B cell (primary cell): ENCODE measurements at regions of chr3 and their contacts with region 1.

Region 1: DNA sequence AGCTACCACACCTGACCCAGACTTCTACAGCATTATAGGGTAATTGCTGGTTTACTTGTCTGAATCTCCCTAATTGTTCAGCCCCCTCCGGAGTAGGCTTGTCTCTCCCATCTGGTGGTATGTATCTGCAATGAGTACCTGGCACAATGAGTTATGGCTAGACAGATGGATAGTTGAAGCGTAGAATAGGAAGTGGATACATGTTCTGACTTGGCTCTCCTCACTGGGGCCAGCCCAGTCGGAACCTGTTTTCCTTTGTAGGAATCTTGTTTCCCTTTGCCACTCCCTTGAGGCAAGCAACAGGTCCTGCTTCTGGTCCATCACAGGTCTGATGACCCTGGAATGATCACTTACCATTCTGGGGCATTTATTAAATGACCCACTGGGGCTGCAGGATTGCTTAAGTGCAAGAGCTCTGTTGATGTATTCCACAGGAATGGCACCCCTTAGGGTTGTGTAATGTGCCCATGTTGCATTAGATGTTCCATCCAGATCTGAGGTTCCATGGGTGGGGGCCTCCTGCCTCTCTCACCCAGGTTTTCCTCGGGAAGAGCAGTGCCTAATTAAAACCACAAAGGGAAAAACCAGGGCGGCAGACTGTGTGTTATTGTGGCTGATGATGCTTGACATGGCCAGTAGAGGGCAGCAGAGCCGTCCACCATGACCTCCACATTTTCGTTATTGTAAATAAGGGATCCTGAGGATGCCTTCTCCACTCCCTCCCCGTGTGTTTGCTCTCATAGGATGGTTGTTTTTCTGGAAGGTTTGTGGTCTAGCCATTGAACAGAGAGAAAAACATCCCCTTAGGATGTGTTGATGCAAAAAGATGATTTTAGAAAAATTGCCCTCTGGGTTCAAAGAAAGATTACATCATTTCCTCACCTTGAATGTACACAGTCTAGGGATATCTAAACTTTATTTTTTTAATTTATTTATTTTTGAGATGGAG is 58.0 kb downstream of the CMTM8 start:
- DNase-seq: peak; percentile 74
- ATAC-seq: peak; percentile 64
- H3K4me3 ChIP-seq: no peak overlapping the region
- H3K4me3 Mint-ChIP-seq: no peak overlapping the region
- H3K27ac ChIP-seq: no peak overlapping the region
- H3K27ac Mint-ChIP-seq: no peak overlapping the region
- H3K4me1 ChIP-seq: peaks cover 6 to 7% of the 10 kb centered on the region in 2 donors
- H3K4me1 Mint-ChIP-seq: peaks cover 5% of the 10 kb centered on the region
- H3K27me3 ChIP-seq: no peaks in the 10 kb centered on the region
- H3K27me3 Mint-ChIP-seq: peaks cover 3% of the 10 kb centered on the region
- CTCF ChIP-seq: peak; percentile 94

Region 2: GRCh38 chr3:32177702-32178198 is 118.8 kb before region 1 on chr3:
- CTCF ChIA-PET with region 1: interaction called, 3 read pairs
- POLR2A ChIA-PET with region 1: no interaction called
- intact Hi-C with region 1: loop called (anchors 5 kb)
- DNase-seq: peak; percentile 53
- ATAC-seq: peak; percentile 61
- H3K4me3 ChIP-seq: peak overlapping the region in 1 of 5 experiments; percentile 2
- H3K4me3 Mint-ChIP-seq: peak overlapping the region; percentile 14
- H3K27ac ChIP-seq: no peak overlapping the region
- H3K27ac Mint-ChIP-seq: no peak overlapping the region
- H3K4me1 ChIP-seq: peaks cover 4 to 15% of the 10 kb centered on the region in 2 donors
- H3K4me1 Mint-ChIP-seq: peaks cover 21% of the 10 kb centered on the region
- H3K27me3 ChIP-seq: peaks cover 0 to 9% (median 0%) of the 10 kb centered on the region in 4 experiments
- H3K27me3 Mint-ChIP-seq: peaks cover 13% of the 10 kb centered on the region
- CTCF ChIP-seq: no peak

Region 3: DNA sequence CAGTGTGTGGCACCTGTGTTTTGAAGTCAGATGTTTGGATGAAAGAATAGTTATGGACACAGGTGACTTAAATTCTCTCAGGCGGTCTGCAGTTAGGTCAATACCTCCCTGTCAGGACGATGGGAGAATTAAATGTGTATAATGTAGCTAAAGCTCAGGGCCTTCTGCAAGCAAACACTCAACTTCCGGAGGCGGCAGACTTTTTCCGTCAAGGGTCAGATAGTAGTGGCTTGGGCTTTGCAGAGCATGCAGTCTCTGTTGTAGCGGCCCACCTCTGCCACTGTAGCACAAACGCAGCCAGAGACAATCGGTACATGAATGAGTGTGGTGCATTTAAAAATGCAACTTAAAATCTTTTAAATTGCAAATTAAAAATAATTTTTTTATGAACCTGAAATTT is 10.6 kb before region 1 on chr3:
- CTCF ChIA-PET with region 1: interaction called, 31 read pairs
- POLR2A ChIA-PET with region 1: no interaction called
- intact Hi-C with region 1: no loop called
- DNase-seq: no peak
- ATAC-seq: peak; percentile 39
- H3K4me3 ChIP-seq: no peak overlapping the region
- H3K4me3 Mint-ChIP-seq: peak overlapping the region; percentile 8
- H3K27ac ChIP-seq: peak overlapping the region in 1 of 2 donors; percentile 43
- H3K27ac Mint-ChIP-seq: peak overlapping the region; percentile 34
- H3K4me1 ChIP-seq: peaks cover 24 to 32% of the 10 kb centered on the region in 2 donors
- H3K4me1 Mint-ChIP-seq: peaks cover 30% of the 10 kb centered on the region
- H3K27me3 ChIP-seq: peaks cover 0 to 4% (median 0%) of the 10 kb centered on the region in 4 experiments
- H3K27me3 Mint-ChIP-seq: peaks cover 4% of the 10 kb centered on the region
- CTCF ChIP-seq: no peak

Region 4: DNA sequence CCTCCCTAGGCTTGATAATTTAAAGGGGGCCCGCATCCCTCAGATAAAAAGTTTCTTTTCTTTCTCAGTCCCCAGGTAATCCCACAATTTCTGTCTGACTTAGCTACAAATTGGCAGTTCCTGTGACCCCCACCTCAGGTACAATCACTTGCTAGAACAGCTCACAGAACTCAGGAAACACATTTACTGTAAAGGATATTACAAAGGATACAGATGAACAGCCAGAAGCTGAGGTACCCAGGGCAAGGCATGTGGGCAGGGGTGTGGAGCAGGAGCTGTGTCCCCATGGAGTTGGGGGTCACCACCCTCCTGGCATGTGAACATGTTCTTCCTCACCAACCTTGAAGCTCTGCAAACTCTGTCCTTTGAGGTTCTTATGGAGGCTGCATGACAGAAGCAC is 15.7 kb after region 1 on chr3:
- CTCF ChIA-PET with region 1: interaction called, 10 read pairs
- POLR2A ChIA-PET with region 1: interaction called, 3 read pairs
- intact Hi-C with region 1: no loop called
- DNase-seq: no peak
- ATAC-seq: no peak
- H3K4me3 ChIP-seq: no peak overlapping the region
- H3K4me3 Mint-ChIP-seq: no peak overlapping the region
- H3K27ac ChIP-seq: no peak overlapping the region
- H3K27ac Mint-ChIP-seq: no peak overlapping the region
- H3K4me1 ChIP-seq: peaks cover 0 to 5% of the 10 kb centered on the region in 2 donors
- H3K4me1 Mint-ChIP-seq: peaks cover 6% of the 10 kb centered on the region
- H3K27me3 ChIP-seq: no peaks in the 10 kb centered on the region
- H3K27me3 Mint-ChIP-seq: peaks cover 13% of the 10 kb centered on the region
- CTCF ChIP-seq: no peak

Region 5: DNA sequence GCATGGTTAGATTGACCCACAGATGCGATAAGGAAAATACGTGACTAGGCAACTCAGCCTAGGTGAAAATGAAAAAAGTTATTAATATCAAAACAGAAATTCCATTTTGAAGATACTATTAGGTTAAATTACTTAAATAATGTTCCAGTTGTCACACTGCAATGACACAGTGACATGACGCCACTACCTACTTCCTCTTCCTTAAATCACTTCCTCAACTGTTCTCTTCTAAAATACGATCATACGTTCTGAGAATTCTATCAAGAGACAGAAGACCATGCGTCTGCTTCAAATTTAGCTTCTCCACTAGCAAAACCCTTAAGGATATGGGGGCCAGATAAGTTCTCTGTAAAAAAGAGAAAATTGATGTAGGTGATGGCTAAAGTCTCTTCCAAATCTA is 187.9 kb after region 1 on chr3:
- CTCF ChIA-PET with region 1: interaction called, 10 read pairs
- POLR2A ChIA-PET with region 1: no interaction called
- intact Hi-C with region 1: no loop called
- DNase-seq: peak; percentile 86
- ATAC-seq: peak; percentile 83
- H3K4me3 ChIP-seq: peak overlapping the region; percentile 19 to 53 (median 31)
- H3K4me3 Mint-ChIP-seq: peak overlapping the region; percentile 68
- H3K27ac ChIP-seq: peak overlapping the region; percentile 85 to 94
- H3K27ac Mint-ChIP-seq: peak overlapping the region; percentile 75
- H3K4me1 ChIP-seq: peaks cover 13 to 14% of the 10 kb centered on the region in 2 donors
- H3K4me1 Mint-ChIP-seq: peaks cover 30% of the 10 kb centered on the region
- H3K27me3 ChIP-seq: no peaks in the 10 kb centered on the region
- H3K27me3 Mint-ChIP-seq: no peaks in the 10 kb centered on the region
- CTCF ChIP-seq: no peak

Region 6: GRCh38 chr3:32502118-32502945 is 205.8 kb after region 1 on chr3 and contains the start of gene CMTM6:
- CTCF ChIA-PET with region 1: interaction called, 10 read pairs
- POLR2A ChIA-PET with region 1: no interaction called
- intact Hi-C with region 1: no loop called
- DNase-seq: peak; percentile 86
- ATAC-seq: peak; percentile 83
- H3K4me3 ChIP-seq: peak within 1 kb of the TSS; percentile 82 to 99 (median 97)
- H3K4me3 Mint-ChIP-seq: peak within 1 kb of the TSS; percentile 90
- H3K27ac ChIP-seq: peak within 1 kb of the TSS; percentile 99
- H3K27ac Mint-ChIP-seq: peak within 1 kb of the TSS; percentile 93
- H3K4me1 ChIP-seq: peaks cover 26 to 29% of the 10 kb centered on the region in 2 donors
- H3K4me1 Mint-ChIP-seq: peaks cover 36% of the 10 kb centered on the region
- H3K27me3 ChIP-seq: no peaks in the 10 kb centered on the region
- H3K27me3 Mint-ChIP-seq: no peaks in the 10 kb centered on the region
- CTCF ChIP-seq: no peak
- total RNA-seq, gene CMTM6: 66.3 and 67.7 TPM in 2 replicates

Region 7: DNA sequence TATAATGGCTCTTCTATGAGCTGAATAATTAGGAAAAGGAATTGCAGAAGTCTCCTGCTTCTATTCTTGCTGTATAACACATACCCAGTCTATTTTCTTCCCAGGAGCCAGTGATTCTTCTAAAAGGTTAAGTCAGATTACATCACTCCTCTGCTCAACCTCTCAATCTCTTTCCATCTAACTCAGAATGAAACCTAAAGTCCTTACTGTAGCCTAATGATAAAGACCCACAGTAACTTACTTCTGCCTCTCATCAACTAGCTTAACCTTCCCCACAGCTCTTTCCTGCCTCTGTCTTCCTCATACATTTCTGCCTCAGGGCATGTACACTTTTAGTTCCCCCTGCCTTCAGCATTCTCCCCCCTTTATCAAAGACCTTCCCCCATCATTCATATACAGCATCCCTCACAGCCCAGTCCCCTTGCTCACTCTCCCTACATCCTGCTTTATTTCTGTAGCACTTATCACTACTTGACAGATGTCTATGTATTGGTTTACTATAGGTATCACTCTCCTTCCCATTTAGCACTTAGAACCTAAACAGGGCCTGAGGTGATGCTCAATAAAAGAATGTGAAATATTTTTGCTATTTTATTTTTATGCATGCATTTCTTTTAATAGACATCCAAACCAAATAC is 234.6 kb after region 1 on chr3:
- CTCF ChIA-PET with region 1: no interaction called
- POLR2A ChIA-PET with region 1: no interaction called
- intact Hi-C with region 1: no loop called
- DNase-seq: no peak
- ATAC-seq: no peak
- H3K4me3 ChIP-seq: no peak overlapping the region
- H3K4me3 Mint-ChIP-seq: no peak overlapping the region
- H3K27ac ChIP-seq: no peak overlapping the region
- H3K27ac Mint-ChIP-seq: peak overlapping the region; percentile 22
- H3K4me1 ChIP-seq: no peaks in the 10 kb centered on the region
- H3K4me1 Mint-ChIP-seq: no peaks in the 10 kb centered on the region
- H3K27me3 ChIP-seq: no peaks in the 10 kb centered on the region
- H3K27me3 Mint-ChIP-seq: no peaks in the 10 kb centered on the region
- CTCF ChIP-seq: no peak

Region 8: GRCh38 chr3:32667122-32667521 is 370.6 kb after region 1 on chr3:
- CTCF ChIA-PET with region 1: interaction called, 6 read pairs
- POLR2A ChIA-PET with region 1: no interaction called
- intact Hi-C with region 1: loop called (anchors 1 kb)
- DNase-seq: no peak
- ATAC-seq: no peak
- H3K4me3 ChIP-seq: no peak overlapping the region
- H3K4me3 Mint-ChIP-seq: no peak overlapping the region
- H3K27ac ChIP-seq: no peak overlapping the region
- H3K27ac Mint-ChIP-seq: no peak overlapping the region
- H3K4me1 ChIP-seq: no peaks in the 10 kb centered on the region
- H3K4me1 Mint-ChIP-seq: no peaks in the 10 kb centered on the region
- H3K27me3 ChIP-seq: no peaks in the 10 kb centered on the region
- H3K27me3 Mint-ChIP-seq: peaks cover 7% of the 10 kb centered on the region
- CTCF ChIP-seq: no peak

Region 9: GRCh38 chr3:32816439-32817256 is 520.1 kb after region 1 on chr3:
- CTCF ChIA-PET with region 1: no interaction called
- POLR2A ChIA-PET with region 1: no interaction called
- intact Hi-C with region 1: no loop called
- DNase-seq: peak; percentile 48
- ATAC-seq: no peak
- H3K4me3 ChIP-seq: peak overlapping the region in 4 of 5 experiments; percentile 25 to 46 (median 44)
- H3K4me3 Mint-ChIP-seq: peak overlapping the region; percentile 77
- H3K27ac ChIP-seq: no peak overlapping the region
- H3K27ac Mint-ChIP-seq: no peak overlapping the region
- H3K4me1 ChIP-seq: peaks cover 14 to 23% of the 10 kb centered on the region in 2 donors
- H3K4me1 Mint-ChIP-seq: peaks cover 30% of the 10 kb centered on the region
- H3K27me3 ChIP-seq: peaks cover 0 to 30% (median 15%) of the 10 kb centered on the region in 4 experiments
- H3K27me3 Mint-ChIP-seq: peaks cover 43% of the 10 kb centered on the region
- CTCF ChIP-seq: no peak